Activated CD8-positive, alpha-beta T cell treated with anti-CD3 and anti-CD28 coated beads for 36 hours (primary cell): ENCODE measurements at regions of chr7 and their contacts with region 1.

Region 1: GRCh38 chr7:19747740-19748339 is 25.6 kb downstream of the TMEM196 start:
- DNase-seq: no peak
- ATAC-seq: no peak
- H3K4me3 Mint-ChIP-seq: no peak overlapping the region
- H3K27ac Mint-ChIP-seq: no peak overlapping the region
- H3K4me1 Mint-ChIP-seq: no peaks in the 10 kb centered on the region
- H3K27me3 Mint-ChIP-seq: peaks cover 5% of the 10 kb centered on the region
- CTCF ChIP-seq: peak; percentile 56

Region 2: GRCh38 chr7:20172736-20173334 is 425.0 kb after region 1 on chr7:
- CTCF ChIA-PET with region 1: interaction called, 3 read pairs
- POLR2A ChIA-PET with region 1: no interaction called
- intact Hi-C with region 1: loop called (anchors 5 kb)
- DNase-seq: peak; percentile 56
- ATAC-seq: no peak
- H3K4me3 Mint-ChIP-seq: no peak overlapping the region
- H3K27ac Mint-ChIP-seq: no peak overlapping the region
- H3K4me1 Mint-ChIP-seq: no peaks in the 10 kb centered on the region
- H3K27me3 Mint-ChIP-seq: no peaks in the 10 kb centered on the region
- CTCF ChIP-seq: peak; percentile 57

Region 3: DNA sequence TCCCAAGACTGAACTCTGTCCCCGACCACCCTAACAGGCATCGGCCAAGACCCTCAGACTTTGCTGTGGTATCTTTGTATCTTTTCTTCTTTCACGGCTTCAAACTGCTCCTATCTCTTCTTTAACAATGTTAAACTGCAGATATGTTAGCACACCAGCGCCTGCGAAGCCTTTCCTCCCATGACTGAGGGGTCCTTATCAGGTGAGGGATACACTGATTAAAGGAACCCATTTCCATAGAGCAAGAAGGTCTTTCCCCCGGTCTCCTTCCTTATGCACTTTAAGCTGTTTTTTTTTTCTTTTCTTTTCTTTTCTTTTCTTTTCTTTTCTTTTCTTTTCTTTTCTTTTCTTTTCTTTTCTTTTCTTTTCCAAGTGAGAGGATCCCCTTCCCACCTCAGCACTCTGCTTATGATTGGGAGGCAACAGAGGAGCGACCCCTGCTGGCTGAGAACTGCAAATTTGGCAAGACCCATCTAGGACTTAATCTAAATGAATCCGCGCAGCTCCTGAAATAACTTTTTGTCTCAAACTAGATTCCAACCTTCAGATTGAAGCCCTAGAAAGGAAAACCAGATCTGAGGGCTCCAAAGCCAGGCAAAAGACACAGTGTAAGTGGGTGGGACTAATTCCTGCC is 692.7 kb after region 1 on chr7:
- CTCF ChIA-PET with region 1: no interaction called
- POLR2A ChIA-PET with region 1: no interaction called
- intact Hi-C with region 1: loop called (anchors 10 kb)
- DNase-seq: peak; percentile 35
- ATAC-seq: no peak
- H3K4me3 Mint-ChIP-seq: no peak overlapping the region
- H3K27ac Mint-ChIP-seq: no peak overlapping the region
- H3K4me1 Mint-ChIP-seq: no peaks in the 10 kb centered on the region
- H3K27me3 Mint-ChIP-seq: peaks cover 1% of the 10 kb centered on the region
- CTCF ChIP-seq: peak; percentile 36